PC-3 (cell line): ENCODE measurements at regions of chr2 and their contacts with region 1.

Region 1: DNA sequence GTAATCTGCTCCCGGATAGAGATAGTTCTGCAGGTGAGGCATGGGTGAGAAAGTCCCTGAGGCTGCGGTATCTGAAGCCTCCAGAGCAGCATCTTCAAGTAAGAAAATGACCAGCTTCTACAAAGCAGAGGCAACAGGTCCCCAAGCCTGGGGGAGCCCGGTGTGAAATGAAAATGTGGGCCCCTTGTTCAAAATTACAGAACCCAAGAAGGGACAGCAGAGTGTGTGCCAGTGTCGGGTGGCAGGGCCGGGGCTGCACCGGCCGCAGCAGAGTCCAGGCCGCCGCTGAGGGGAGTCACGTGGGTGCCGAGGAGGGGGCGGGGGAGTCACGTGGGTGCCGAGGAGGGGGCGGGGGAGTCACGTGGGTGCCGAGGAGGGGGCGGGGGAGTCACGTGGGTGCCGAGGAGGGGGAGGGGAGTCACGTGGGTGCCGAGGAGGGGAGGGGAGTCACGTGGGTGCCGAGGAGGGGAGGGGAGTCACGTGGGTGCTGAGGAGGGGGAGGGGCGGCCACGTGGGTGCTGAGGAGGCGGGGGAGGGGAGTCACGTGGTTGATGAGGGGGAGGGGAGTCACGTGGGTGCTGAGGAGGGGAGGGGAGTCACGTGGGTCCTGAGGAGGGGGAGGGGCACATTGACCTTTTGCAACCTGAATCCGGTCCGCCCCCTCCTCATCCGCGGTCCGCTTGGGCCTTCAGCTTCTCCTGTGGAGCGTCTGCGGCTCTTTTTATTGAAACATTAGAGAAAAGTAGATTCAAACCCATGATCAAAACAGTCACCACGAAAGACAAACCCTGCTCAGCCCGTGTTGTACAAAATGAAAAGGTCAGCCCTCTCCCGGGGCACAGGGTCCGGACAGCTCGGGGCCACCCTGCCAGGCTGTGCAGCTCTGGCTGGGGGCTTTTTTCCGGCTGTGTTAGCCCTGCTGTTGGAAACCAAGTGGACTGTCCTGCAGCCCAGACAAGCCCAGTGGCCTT is 10.4 kb downstream of the COLEC11 start:
- DNase-seq: peak; percentile 48
- ATAC-seq: peak; percentile 53
- H3K4me3 ChIP-seq: no peak overlapping the region
- H3K27ac ChIP-seq: peak overlapping the region; percentile 39
- H3K4me1 ChIP-seq: peaks cover 4% of the 10 kb centered on the region; the same call in 1 of the 2 replicates
- H3K27me3 ChIP-seq: no peaks in the 10 kb centered on the region
- CTCF ChIP-seq: no peak

Region 2: DNA sequence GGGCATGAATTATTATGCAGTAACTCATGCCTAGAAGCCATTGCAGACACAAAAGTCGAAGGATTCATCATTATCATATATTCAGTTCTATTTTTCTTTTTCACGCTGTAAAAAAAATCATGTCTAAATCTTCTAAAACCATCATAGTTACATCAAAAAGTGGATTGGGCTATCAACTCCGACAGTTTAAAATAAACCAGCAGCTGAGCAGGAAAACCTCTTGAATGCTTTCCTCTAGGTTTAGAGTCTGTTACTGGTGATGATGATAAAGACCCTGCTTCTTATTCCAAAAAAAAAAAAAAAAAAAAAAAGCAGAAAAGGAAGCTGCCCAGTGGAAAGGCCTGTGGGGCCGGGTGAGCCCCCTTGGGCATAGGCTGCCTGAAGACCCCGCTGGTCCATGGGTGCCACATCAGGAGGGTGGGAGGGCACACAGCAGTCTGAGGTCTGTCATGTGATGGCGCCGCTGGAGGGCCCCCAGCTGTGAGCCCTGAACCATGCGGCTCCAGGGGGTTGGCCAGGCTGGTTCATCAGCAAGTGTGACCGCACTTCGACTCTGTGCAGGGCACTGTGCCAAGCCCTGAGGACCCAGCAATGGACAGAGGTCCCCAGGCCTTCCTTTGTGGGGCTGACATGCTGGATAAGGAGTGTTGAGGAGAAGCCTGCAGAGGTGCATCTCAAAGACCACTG is 427.2 kb before region 1 on chr2:
- CTCF ChIA-PET with region 1: interaction called, 10 read pairs
- POLR2A ChIA-PET with region 1: no interaction called
- intact Hi-C with region 1: no loop called
- DNase-seq: no peak
- ATAC-seq: no peak
- H3K4me3 ChIP-seq: no peak overlapping the region
- H3K27ac ChIP-seq: no peak overlapping the region
- H3K4me1 ChIP-seq: no peaks in the 10 kb centered on the region
- H3K27me3 ChIP-seq: no peaks in the 10 kb centered on the region
- CTCF ChIP-seq: no peak

Region 3: GRCh38 chr2:3728104-3729054 is 123.1 kb after region 1 on chr2:
- CTCF ChIA-PET with region 1: no interaction called
- POLR2A ChIA-PET with region 1: no interaction called
- intact Hi-C with region 1: no loop called
- DNase-seq: peak; percentile 72
- ATAC-seq: peak; percentile 60
- H3K4me3 ChIP-seq: no peak overlapping the region
- H3K27ac ChIP-seq: no peak overlapping the region
- H3K4me1 ChIP-seq: peaks cover 6% of the 10 kb centered on the region; the same call in 1 of the 2 replicates
- H3K27me3 ChIP-seq: peaks cover 34% of the 10 kb centered on the region
- CTCF ChIP-seq: peak; percentile 75